ENCODE measurements at regions of chr1 and their contacts with region 1.

Region 1: DNA sequence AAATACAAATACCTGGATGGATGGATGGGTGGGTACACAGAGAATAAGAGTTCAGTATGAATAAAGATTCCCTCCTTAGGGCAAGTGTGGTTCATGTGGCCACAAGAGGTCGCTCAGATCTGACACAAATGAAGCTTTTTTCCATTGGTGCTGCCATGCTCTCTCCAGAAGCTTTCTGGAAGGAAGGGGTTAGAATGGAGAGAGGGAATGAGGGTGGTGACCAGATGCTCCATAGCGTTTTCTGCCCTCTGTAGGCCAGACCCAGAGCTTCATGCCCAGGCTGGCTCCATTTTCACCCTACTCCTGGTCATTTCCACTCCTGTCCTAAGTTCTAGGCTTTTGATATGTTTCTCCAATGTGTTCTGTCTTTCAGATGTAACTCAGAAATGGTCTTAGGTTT is 3.3 kb upstream of the FCRL6 start:
- DNase-seq: peak; percentile 79 to 86 (median 83)
- H3K4me3 ChIP-seq: no peak overlapping the region
- H3K27ac ChIP-seq: no peak overlapping the region
- H3K4me1 ChIP-seq: peaks cover 0 to 13% (median 8%) of the 10 kb centered on the region in 4 experiments
- H3K27me3 ChIP-seq: peaks cover 0 to 6% (median 0%) of the 10 kb centered on the region in 5 experiments

Region 2: DNA sequence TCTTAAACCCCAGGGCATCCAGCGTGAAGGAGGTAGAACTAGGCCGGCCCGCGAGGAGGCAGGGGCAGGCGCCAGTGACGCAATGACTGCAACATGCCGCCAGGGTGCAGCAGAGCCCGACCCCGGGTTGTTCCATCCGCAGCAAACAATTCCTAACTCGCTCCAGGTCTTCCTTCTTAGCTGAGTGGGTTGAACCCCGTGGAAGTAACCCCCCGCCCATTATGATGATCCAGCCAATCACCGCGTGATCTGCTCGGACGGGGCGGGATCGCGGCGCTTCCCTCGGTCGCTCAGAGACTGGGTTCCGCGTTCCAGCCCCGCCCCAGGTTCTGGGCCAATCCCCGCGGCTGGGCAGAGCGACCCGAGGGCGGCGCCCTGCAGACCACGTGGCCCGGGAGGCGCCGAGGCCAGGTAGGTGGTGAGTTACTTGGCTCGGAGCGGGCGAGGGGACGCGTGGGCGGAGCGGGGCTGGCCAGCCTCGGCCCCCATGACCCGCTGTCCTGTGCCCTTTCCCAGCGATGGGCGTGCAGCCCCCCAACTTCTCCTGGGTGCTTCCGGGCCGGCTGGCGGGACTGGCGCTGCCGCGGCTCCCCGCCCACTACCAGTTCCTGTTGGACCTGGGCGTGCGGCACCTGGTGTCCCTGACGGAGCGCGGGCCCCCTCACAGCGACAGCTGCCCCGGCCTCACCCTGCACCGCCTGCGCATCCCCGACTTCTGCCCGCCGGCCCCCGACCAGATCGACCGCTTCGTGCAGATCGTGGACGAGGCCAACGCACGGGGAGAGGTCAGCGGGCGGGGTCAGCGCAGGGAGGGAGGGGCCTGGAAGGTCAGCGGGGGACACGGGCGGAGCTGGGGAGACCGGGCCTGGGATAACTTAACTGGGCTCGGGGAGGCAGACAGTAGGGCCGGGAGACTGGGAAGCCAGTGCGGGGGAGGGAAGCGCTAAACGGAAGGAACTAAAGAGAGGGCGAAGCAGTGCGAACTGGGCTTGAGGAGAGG is 18.0 kb before region 1 on chr1 and contains the start of gene DUSP23:
- CTCF ChIA-PET with region 1: interaction called, 33 read pairs
- POLR2A ChIA-PET with region 1: no interaction called
- DNase-seq: peak; percentile 97 to 98 (median 98)
- H3K4me3 ChIP-seq: peak within 1 kb of the TSS; percentile 51 to 83 (median 70)
- H3K27ac ChIP-seq: peak within 1 kb of the TSS in 1 of 2 experiments; percentile 32
- H3K4me1 ChIP-seq: peaks cover 4 to 33% (median 16%) of the 10 kb centered on the region in 4 experiments
- H3K27me3 ChIP-seq: no peaks in the 10 kb centered on the region

Region 3: DNA sequence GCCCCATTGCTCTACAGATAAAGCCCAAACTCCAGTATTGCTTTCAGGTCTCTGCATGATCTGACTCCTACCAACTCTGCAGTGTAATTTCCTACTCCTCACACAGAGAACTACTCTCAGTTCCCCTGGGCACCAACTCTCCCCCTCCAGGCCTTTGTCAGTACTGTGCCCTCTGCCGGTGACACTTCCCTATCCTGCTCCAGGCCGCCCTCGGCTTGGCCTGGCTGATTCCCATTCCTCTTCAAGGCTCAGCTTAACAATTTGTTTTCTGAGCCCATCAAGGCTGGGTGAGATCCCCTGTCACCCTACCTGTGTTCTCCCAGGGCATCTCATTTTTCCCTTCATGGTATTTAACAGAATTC is 30.4 kb after region 1 on chr1:
- CTCF ChIA-PET with region 1: interaction called, 111 read pairs
- POLR2A ChIA-PET with region 1: interaction called, 4 read pairs
- DNase-seq: peak; percentile 68 to 81 (median 81)
- H3K4me3 ChIP-seq: no peak overlapping the region
- H3K27ac ChIP-seq: no peak overlapping the region
- H3K4me1 ChIP-seq: peaks cover 4 to 23% (median 18%) of the 10 kb centered on the region in 4 experiments
- H3K27me3 ChIP-seq: peaks cover 0 to 1% (median 0%) of the 10 kb centered on the region in 5 experiments

Region 4: DNA sequence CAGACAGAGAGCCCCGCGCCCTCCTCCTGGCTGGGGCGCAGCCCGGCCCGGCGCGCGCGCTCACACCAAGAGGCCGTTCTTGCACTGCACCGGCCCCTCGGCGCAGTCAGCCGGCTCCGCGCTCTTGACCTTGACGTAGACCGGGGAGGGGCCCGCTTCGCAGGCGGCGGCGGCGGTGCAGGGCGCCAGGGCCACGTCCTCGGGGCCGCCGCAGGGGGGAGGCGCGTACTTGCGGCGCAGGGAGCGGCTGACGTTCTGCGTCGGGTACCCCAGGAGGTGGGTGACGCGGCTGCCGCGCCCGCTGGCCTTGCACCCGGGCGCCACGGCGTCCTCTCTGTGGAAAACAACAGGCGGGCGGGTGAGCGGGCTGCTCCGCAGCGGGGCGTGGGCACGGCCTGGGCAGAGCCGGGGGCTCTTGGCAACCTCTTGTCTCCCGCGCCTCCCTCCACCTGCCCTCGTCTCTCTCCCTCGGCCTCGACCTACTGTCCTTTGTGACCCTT is 55.9 kb after region 1 on chr1:
- CTCF ChIA-PET with region 1: interaction called, 16 read pairs
- POLR2A ChIA-PET with region 1: no interaction called
- DNase-seq: peak; percentile 68 to 88 (median 76)
- H3K4me3 ChIP-seq: peak overlapping the region; percentile 60 to 84 (median 68)
- H3K27ac ChIP-seq: peak overlapping the region in 1 of 2 experiments; percentile 47
- H3K4me1 ChIP-seq: peaks cover 2 to 20% (median 14%) of the 10 kb centered on the region in 4 experiments
- H3K27me3 ChIP-seq: no peaks in the 10 kb centered on the region

Region 5: DNA sequence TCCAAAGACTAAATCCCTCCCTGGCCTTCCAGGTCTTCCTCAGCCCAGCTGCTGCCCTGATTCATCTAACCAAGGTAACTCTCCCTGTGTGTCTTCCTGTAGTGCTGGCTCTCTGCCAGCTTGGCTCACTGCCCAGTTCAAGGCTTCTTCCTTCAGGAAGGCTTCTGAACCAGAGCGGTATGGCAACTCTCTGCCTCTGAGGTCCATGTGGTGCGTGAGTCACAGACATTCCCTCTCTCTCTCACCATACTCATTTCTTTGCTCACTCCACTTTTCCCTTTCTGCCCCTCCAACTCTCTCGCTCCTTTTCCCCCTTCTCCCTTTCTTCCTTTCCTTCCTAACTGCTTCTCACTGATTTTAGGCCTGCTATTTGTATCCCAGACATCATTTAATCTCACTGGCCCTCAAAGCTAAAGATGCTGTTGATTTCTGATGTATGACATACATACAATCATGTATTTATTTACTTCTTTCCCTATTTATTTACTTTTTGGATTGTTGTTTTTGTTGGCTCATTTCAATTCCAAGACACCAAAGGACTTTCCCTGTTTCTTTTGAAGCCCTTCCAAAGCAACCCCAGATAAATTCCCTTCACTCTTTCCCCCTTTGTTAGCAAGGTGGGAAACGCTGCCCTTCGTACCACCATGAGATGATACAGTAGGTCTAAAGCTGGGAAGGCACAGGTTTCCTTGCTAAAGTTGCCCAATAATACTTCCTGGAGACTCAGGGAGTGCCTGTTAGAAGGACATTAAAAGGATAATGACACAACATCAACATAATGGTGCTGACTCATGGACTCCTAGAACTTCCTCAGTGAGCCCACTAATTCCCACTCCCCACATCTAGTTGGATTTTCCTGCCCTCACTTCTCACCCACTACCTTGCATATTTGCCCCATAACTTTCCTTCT is 83.3 kb after region 1 on chr1:
- CTCF ChIA-PET with region 1: interaction called, 411 read pairs
- POLR2A ChIA-PET with region 1: no interaction called
- DNase-seq: peak; percentile 43 to 58 (median 47)
- H3K4me3 ChIP-seq: no peak overlapping the region
- H3K27ac ChIP-seq: no peak overlapping the region
- H3K4me1 ChIP-seq: peaks cover 0 to 25% (median 13%) of the 10 kb centered on the region in 4 experiments
- H3K27me3 ChIP-seq: no peaks in the 10 kb centered on the region

Region 6: GRCh38 chr1:160006312-160006940 is 207.5 kb after region 1 on chr1:
- CTCF ChIA-PET with region 1: interaction called, 37 read pairs
- POLR2A ChIA-PET with region 1: no interaction called
- DNase-seq: peak; percentile 81 to 90 (median 89)
- H3K4me3 ChIP-seq: no peak overlapping the region
- H3K27ac ChIP-seq: no peak overlapping the region
- H3K4me1 ChIP-seq: no peaks in the 10 kb centered on the region
- H3K27me3 ChIP-seq: no peaks in the 10 kb centered on the region